Activated T-helper 2 cell treated with anti-CD3 and anti-CD28 coated beads, Interferon-gamma antibody, Interleukin-2, Interleukin-4, amounts not matched to agents 10 μg/mL and 5 μg/mL and 100 μg/mL, durations not matched to agents 14 hours and 24 hours and 36 hours (primary cell): ENCODE measurements at regions of chr21 and their contacts with region 1.

Region 1: GRCh38 chr21:29018540-29018939 is 609 bp downstream of the RWDD2B start:
- DNase-seq: no peak
- H3K4me3 Mint-ChIP-seq: peak overlapping the region; percentile 85
- H3K27ac Mint-ChIP-seq: peak overlapping the region; percentile 78
- H3K4me1 Mint-ChIP-seq: peaks cover 19% of the 10 kb centered on the region
- H3K27me3 Mint-ChIP-seq: no peaks in the 10 kb centered on the region

Region 2: DNA sequence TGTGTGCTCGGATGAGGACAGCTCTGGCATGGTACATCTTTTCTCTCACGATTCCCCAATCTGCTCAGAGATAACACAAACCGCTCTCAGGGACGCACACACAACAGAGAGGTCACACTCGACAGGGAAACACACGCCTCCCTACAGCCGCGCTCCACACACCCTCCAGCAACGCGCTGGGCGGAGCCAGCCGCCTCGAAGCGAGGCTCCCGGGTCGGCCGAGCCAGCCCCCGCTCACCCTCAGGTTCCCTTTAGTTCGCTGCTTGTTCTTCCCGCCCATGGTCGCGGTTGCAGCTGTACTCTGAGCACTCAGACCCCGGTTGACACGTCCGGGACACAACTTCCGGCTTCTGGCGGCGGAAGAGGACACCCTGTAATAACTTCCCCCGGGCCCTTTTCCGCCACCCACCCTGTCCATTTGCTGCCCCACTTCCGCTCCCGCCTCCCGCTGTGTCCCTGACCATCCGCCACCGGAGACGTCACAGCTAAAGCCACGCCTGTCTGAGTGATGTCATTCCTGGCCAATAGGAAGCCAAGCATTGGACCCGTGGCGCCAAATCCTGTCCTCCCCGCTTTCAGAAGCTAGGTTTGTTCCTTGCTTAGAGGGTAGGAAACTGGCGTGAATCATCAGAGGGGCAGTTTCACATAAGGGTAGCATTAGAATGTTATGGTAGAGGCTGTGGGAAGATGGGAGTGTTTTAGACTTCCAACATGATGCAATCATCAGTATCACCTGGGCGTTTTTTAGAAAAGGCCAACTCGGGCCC is 25.8 kb before region 1 on chr21 and contains the start of gene LTN1:
- intact Hi-C with region 1: loop called (anchors 1 kb)
- DNase-seq: peak; percentile 99
- H3K4me3 Mint-ChIP-seq: peak within 1 kb of the TSS; percentile 95
- H3K27ac Mint-ChIP-seq: peak within 1 kb of the TSS; percentile 95
- H3K4me1 Mint-ChIP-seq: peaks cover 30% of the 10 kb centered on the region
- H3K27me3 Mint-ChIP-seq: no peaks in the 10 kb centered on the region
- total RNA-seq, gene LTN1: 24.9 and 27.5 TPM in 2 replicates